BJ (cell line): ENCODE measurements at regions of chr5 and their contacts with region 1.

Region 1: GRCh38 chr5:172303572-172304335 is 20.2 kb upstream of the UBTD2 start:
- DNase-seq: no peak
- H3K4me3 ChIP-seq: no peak overlapping the region
- H3K27me3 ChIP-seq: no peaks in the 10 kb centered on the region; the same call in 1 of the 2 replicates
- CTCF ChIP-seq: no peak

Region 2: DNA sequence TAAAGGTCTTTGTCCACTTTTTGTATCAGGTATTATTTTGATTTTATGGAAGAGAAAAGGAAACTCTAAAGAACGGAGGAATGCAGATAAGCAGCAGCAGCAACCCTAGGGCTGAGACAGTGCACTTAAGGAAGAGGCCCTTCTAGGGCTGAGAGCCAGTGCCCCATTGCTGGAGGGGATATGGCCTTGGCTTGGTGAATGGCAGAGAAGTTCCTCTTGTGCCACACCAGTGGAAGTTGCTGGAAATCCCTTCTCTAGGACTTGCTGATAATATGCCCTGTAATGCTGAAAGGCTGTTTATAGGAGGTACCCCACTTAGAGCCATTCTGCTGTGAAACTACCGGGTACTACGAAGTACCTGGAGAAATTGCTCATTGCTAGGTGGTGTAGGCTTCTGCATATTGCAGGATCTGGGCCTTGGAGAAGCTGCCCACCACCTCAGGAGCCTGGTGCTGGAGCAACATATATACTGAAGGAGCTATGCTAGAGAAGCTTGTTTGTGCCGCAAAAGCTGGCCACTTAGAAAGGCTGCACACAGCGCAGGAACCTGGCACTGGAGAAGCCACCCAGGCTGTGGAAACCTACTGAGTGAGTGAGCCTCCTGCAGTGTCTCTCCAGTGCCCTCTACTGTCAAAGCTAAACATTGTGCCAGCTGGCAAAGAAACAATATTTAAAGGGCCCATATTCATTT is 10.6 kb before region 1 on chr5:
- CTCF ChIA-PET with region 1: interaction called, 14 read pairs
- POLR2A ChIA-PET with region 1: no interaction called
- DNase-seq: no peak
- H3K4me3 ChIP-seq: no peak overlapping the region
- H3K27me3 ChIP-seq: no peaks in the 10 kb centered on the region; the same call in 1 of the 2 replicates
- CTCF ChIP-seq: peak; percentile 94